ENCODE measurements at regions of chrX and their contacts with region 1.

Region 1: GRCh38 chrX:119943185-119943988 is at the start of gene NKAP:
- DNase-seq: peak; percentile 95
- H3K4me3 Mint-ChIP-seq: peak within 1 kb of the TSS; percentile 91
- H3K27ac Mint-ChIP-seq: peak within 1 kb of the TSS; percentile 97
- H3K4me1 Mint-ChIP-seq: peaks cover 14% of the 10 kb centered on the region
- H3K27me3 Mint-ChIP-seq: peaks cover 2% of the 10 kb centered on the region
- total RNA-seq, gene NKAP: 8.9 and 10.2 TPM in 2 replicates

Region 2: GRCh38 chrX:119871599-119872395 is 71.6 kb before region 1 on chrX and contains the starts of genes NDUFA1 and RNF113A:
- intact Hi-C with region 1: loop called (anchors 1 kb)
- DNase-seq: peak; percentile 96
- H3K4me3 Mint-ChIP-seq: peak within 1 kb of the TSS; percentile 98
- H3K27ac Mint-ChIP-seq: peak within 1 kb of the TSS; percentile 99
- H3K4me1 Mint-ChIP-seq: peaks cover 5% of the 10 kb centered on the region
- H3K27me3 Mint-ChIP-seq: no peaks in the 10 kb centered on the region
- total RNA-seq, gene NDUFA1: 75.1 and 79.0 TPM in 2 replicates
- total RNA-seq, gene RNF113A: 25.2 and 26.7 TPM in 2 replicates

Region 3: DNA sequence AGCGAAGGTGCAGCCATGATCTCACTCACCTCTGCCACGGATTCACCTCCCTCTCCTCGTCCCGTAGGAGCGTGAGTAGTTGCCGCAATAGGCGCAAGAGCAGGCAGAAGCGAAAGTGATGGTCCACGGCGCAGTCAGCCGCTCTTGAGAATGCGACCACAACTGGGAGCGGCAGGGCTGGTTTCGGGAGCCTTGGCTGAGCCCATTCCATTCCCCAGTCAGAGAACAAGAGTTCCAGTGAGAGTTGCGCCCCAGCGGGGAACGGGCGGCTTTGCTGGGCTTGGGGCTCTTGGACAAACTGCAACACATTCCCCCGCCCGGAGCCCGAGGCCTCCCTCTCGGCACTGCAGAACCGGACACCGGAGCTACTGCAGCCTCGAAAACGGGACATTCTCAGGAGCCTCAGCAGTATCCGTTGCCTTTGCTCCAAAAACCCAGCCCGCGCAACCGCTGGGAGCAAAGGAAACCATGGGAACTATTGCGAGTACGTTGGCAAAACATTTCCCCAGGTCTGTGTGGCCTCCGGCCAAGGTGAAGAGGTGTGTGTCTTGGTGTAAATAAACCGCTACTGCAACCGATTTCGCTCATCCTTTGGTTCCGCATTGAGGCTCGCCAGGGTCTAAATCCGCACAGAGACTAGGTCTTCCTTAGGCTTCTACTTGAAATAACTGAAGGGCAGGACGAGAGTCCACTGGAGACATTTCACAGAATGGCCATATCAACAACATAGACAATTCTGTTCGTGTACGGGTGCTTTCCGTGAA is 301.5 kb after region 1 on chrX:
- intact Hi-C with region 1: loop called (anchors 10 kb)
- DNase-seq: peak; percentile 83
- H3K4me3 Mint-ChIP-seq: peak overlapping the region; percentile 94
- H3K27ac Mint-ChIP-seq: peak overlapping the region; percentile 83
- H3K4me1 Mint-ChIP-seq: peaks cover 6% of the 10 kb centered on the region
- H3K27me3 Mint-ChIP-seq: no peaks in the 10 kb centered on the region